SK-N-SH (cell line): ENCODE measurements at regions of chr20 and their contacts with region 1.

Region 1: GRCh38 chr20:33489495-33490022 is 337 bp upstream of the CBFA2T2 start:
- DNase-seq: peak; percentile 99
- H3K4me3 ChIP-seq: peak overlapping the region; percentile 46 to 75
- H3K27ac ChIP-seq: peak overlapping the region; percentile 55 to 85
- H3K4me1 ChIP-seq: peaks cover 0 to 3% of the 10 kb centered on the region in 2 experiments; a peak in 2 of 4 replicates
- H3K27me3 ChIP-seq: no peaks in the 10 kb centered on the region
- CTCF ChIP-seq: no peak
- EP300 ChIP-seq: no peak
- RAD21 ChIP-seq: no peak

Region 2: GRCh38 chr20:33561692-33562601 is 72.4 kb after region 1 on chr20:
- CTCF ChIA-PET with region 1: no interaction called
- POLR2A ChIA-PET with region 1: interaction called, 11 read pairs
- DNase-seq: peak; percentile 83
- H3K4me3 ChIP-seq: peak overlapping the region; percentile 21 to 31; a peak in 3 of 4 replicates
- H3K27ac ChIP-seq: peak overlapping the region; percentile 47 to 97
- H3K4me1 ChIP-seq: peaks cover 4 to 10% of the 10 kb centered on the region in 2 experiments; a peak in 3 of 4 replicates
- H3K27me3 ChIP-seq: no peaks in the 10 kb centered on the region
- CTCF ChIP-seq: no peak
- EP300 ChIP-seq: peak; percentile 79 to 94
- RAD21 ChIP-seq: peak; percentile 42

Region 3: GRCh38 chr20:33568378-33568777 is 78.8 kb after region 1 on chr20:
- CTCF ChIA-PET with region 1: no interaction called
- POLR2A ChIA-PET with region 1: interaction called, 12 read pairs
- DNase-seq: peak; percentile 75
- H3K4me3 ChIP-seq: no peak overlapping the region
- H3K27ac ChIP-seq: peak overlapping the region in 1 of 2 experiments; percentile 98; a peak in 2 of 4 replicates
- H3K4me1 ChIP-seq: peaks cover 0 to 35% of the 10 kb centered on the region in 2 experiments; a peak in 2 of 4 replicates
- H3K27me3 ChIP-seq: no peaks in the 10 kb centered on the region
- CTCF ChIP-seq: no peak
- EP300 ChIP-seq: peak in 1 of 2 experiments; percentile 89; a peak in 2 of 4 replicates
- RAD21 ChIP-seq: no peak; the same call in 1 of the 2 replicates

Region 4: DNA sequence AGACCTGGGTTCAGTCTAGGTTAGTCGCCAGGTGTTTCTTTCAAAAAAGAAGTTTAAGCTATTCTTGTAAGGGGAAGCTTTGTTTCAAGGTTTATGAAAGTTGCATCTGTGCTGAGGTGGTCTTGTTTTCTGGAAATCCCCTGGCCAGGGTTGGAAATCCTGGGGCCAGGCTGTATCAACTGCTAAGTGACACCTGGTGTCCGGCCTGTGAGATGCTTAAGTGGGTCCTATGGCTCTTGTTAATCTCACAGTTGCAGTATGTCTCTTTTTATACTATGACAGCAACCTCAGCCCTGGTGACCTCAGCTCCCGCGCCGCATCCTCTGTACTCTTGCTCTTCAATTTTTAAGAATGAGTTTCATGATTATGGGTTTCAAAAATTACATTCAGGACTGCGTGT is 393.6 kb after region 1 on chr20:
- CTCF ChIA-PET with region 1: no interaction called
- POLR2A ChIA-PET with region 1: no interaction called
- DNase-seq: no peak
- H3K4me3 ChIP-seq: no peak overlapping the region
- H3K27ac ChIP-seq: no peak overlapping the region
- H3K4me1 ChIP-seq: no peaks in the 10 kb centered on the region
- H3K27me3 ChIP-seq: no peaks in the 10 kb centered on the region
- CTCF ChIP-seq: no peak
- EP300 ChIP-seq: no peak
- RAD21 ChIP-seq: no peak